Ascending aorta (tissue), 2 donors: ENCODE measurements at regions of chr9 and their contacts with region 1.

Region 1: GRCh38 chr9:124754289-124754688 is 16.8 kb downstream of the NR6A1 start:
- DNase-seq: no peak
- H3K4me3 ChIP-seq: no peak overlapping the region
- H3K27ac ChIP-seq: no peak overlapping the region
- H3K4me1 ChIP-seq: no peaks in the 10 kb centered on the region
- H3K27me3 ChIP-seq: no peaks in the 10 kb centered on the region
- CTCF ChIP-seq: no peak

Region 2: DNA sequence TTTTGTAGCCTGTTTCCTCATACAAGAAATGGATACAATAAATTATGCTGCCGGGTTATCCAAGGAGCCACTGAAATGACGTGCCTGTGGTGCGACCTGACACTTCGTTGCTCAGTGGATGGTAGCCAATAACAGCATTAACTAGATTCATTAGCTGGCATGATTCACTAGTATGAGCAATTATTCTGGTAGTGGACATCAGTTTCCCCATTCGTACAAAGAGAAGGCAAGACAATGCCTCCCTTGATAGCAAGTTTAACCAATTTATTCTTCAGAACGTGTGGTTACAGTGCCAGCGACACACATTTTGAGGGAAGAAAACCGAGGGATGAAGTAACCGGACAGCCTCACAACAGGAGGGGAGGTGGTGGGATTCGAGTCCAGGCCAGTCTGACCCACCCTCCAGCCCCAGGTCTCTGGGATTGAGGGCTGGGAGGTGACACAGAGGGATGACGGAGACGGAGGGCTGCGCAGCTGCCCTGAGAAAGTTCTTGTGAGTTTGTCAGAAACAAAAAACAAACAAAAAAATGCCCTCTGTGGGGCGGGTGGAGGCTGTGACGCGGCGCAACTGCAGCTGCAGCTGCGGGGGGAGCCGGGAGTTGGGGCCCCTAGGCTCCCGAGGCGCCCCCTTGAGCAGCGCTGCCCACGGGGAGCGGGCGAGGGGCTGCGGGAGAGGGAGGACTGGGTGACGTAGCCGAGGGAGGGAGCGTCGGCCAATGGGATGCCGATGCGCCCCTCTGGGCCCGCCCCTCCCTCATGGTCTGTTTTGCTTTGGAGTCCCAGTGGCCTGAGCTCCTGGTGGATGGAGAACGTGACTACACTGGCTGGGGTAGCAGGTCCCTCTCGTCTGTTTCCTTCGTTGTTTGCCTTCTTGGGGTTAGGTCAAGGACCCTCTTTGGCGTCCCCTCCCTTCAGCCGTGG is 731.8 kb before region 1 on chr9:
- intact Hi-C with region 1: loop called (anchors 10 kb)
- DNase-seq: no peak
- H3K4me3 ChIP-seq: no peak overlapping the region
- H3K27ac ChIP-seq: no peak overlapping the region
- H3K4me1 ChIP-seq: peaks cover 4 to 11% of the 10 kb centered on the region in 2 donors
- H3K27me3 ChIP-seq: peaks cover 50% of the 10 kb centered on the region
- CTCF ChIP-seq: no peak